ENCODE measurements at regions of chr22 and their contacts with region 1.

Region 1: DNA sequence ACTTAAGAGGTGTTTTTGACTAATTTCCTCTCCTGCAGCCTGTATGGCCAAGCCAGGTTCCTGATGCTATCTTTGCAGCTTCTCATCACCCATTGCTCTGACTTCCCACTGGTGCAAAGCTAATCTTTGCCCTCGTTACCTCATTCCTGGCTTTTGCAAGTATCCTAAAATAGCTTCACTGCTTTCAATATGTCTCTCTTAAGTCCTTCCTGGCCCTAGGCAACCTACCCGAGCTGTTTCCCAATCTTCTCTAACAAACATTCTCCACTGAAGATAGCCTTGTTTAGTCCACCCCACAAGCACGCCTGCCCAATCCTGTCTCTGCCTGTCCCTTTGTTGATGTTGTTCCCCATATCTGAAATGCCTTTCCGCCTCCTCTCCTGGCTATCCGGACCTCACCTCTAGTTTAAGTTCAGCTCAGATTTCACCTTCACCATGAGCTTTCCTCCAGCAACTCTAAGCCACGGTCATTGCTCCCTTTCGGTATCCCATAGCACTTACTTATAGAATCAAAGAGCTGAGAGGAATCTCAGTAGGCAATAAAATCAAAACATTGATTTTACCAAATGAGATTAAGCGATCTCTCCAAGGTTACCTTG is 30.1 kb upstream of the CECR2 start:
- DNase-seq: no peak
- ATAC-seq: no peak
- H3K4me3 ChIP-seq: no peak overlapping the region
- H3K27ac ChIP-seq: no peak overlapping the region
- H3K4me1 ChIP-seq: no peaks in the 10 kb centered on the region
- H3K27me3 ChIP-seq: peaks cover 2% of the 10 kb centered on the region; the same call in 1 of the 2 replicates
- CTCF ChIP-seq: no peak
- POLR2A ChIP-seq: no peak
- RAD21 ChIP-seq: no peak

Region 2: DNA sequence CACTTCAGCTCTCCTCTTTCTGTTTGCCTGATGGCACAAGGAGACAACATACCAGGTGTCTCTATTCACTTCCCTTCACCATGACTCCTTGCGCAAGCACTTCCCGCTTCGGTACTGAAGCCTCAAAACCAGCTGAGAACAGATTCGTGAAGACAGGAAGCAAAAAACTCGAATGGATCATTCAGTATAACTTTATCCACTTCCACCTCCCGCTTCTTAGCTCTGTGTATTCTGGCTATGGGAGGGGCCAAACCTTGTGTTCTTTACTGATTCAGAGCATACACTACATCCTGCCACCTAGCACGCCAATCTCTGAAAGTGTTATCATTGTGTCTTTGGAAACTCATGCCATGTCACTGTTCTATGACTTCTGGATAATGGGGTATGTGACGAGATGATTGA is 57.8 kb before region 1 on chr22:
- CTCF ChIA-PET with region 1: no interaction called
- POLR2A ChIA-PET with region 1: no interaction called
- dilution Hi-C with region 1: no loop called
- in situ Hi-C with region 1: no loop called
- intact Hi-C with region 1: no loop called
- DNase-seq: no peak
- ATAC-seq: no peak
- H3K4me3 ChIP-seq: no peak overlapping the region
- H3K27ac ChIP-seq: no peak overlapping the region
- H3K4me1 ChIP-seq: no peaks in the 10 kb centered on the region
- H3K27me3 ChIP-seq: no peaks in the 10 kb centered on the region
- CTCF ChIP-seq: no peak
- POLR2A ChIP-seq: no peak
- RAD21 ChIP-seq: no peak

Region 3: DNA sequence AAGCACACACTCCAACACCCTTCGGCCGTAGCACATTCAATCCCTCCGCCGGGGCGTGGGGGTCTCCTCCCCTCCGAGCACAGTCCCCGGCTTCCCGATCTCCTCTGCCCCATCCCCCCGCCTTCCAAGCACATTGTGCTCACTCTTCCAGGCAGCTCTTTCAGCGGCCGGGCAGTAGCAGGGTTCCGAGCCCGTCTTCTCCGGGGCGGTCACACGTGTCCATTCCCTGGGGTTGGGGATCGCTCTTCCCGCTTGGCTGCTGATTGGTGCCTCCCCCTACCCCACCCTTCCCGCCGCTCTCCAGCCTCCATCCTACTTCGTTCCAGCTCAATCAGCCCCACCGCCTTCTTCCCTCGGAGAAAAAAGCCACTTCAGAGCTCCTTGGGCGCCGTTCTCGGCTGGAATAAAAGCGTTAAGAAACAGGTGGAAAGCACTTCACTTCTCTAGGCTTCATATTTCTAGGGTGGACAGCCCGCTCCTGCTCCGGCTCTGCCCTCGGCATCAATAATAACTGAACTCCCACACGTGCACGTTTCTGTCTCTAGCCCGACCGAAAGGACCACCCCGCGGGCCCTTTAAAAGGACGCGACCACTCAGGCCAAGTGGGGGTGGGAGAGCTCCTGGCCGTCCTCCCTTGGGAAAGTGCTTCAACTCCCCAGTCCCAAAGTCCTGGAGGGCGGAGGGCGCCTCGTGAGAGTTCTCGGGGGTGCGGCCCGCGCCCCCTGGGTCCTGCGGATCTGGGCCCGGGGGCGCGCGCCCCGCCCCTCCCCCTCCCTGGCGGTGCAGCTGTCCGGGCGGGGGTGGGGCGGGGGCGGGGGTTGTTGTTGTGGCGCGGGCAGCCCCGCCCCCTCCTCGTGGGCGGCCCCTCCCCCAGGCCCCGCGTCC is 29.6 kb after region 1 on chr22:
- CTCF ChIA-PET with region 1: no interaction called
- POLR2A ChIA-PET with region 1: no interaction called
- dilution Hi-C with region 1: no loop called
- in situ Hi-C with region 1: no loop called
- intact Hi-C with region 1: no loop called
- DNase-seq: no peak
- ATAC-seq: 0 out of 2 replicates have a peak, but pooled peaks have one; percentile 24
- H3K4me3 ChIP-seq: no peak overlapping the region
- H3K27ac ChIP-seq: no peak overlapping the region
- H3K4me1 ChIP-seq: peaks cover 2% of the 10 kb centered on the region; the same call in 1 of the 2 replicates
- H3K27me3 ChIP-seq: peaks cover 41% of the 10 kb centered on the region
- CTCF ChIP-seq: no peak
- POLR2A ChIP-seq: no peak
- RAD21 ChIP-seq: no peak

Region 4: GRCh38 chr22:17387356-17387755 is 48.2 kb after region 1 on chr22:
- CTCF ChIA-PET with region 1: no interaction called
- POLR2A ChIA-PET with region 1: no interaction called
- dilution Hi-C with region 1: no loop called
- in situ Hi-C with region 1: no loop called
- intact Hi-C with region 1: loop called (anchors 5 kb)
- DNase-seq: no peak
- ATAC-seq: no peak
- H3K4me3 ChIP-seq: no peak overlapping the region
- H3K27ac ChIP-seq: no peak overlapping the region
- H3K4me1 ChIP-seq: no peaks in the 10 kb centered on the region
- H3K27me3 ChIP-seq: no peaks in the 10 kb centered on the region
- CTCF ChIP-seq: no peak
- POLR2A ChIP-seq: no peak
- RAD21 ChIP-seq: no peak

Region 5: GRCh38 chr22:17460895-17461294 is 121.7 kb after region 1 on chr22:
- CTCF ChIA-PET with region 1: no interaction called
- POLR2A ChIA-PET with region 1: no interaction called
- dilution Hi-C with region 1: no loop called
- in situ Hi-C with region 1: no loop called
- intact Hi-C with region 1: no loop called
- DNase-seq: no peak
- ATAC-seq: no peak
- H3K4me3 ChIP-seq: no peak overlapping the region
- H3K27ac ChIP-seq: no peak overlapping the region
- H3K4me1 ChIP-seq: no peaks in the 10 kb centered on the region
- H3K27me3 ChIP-seq: no peaks in the 10 kb centered on the region
- CTCF ChIP-seq: no peak
- POLR2A ChIP-seq: no peak
- RAD21 ChIP-seq: no peak

Region 6: GRCh38 chr22:18078329-18079041 is 739.3 kb after region 1 on chr22:
- CTCF ChIA-PET with region 1: no interaction called
- POLR2A ChIA-PET with region 1: no interaction called
- dilution Hi-C with region 1: no loop called
- in situ Hi-C with region 1: no loop called
- intact Hi-C with region 1: no loop called
- DNase-seq: peak; percentile 19
- ATAC-seq: peak; percentile 4; the same call in 1 of the 2 replicates
- H3K4me3 ChIP-seq: peak overlapping the region; percentile 87
- H3K27ac ChIP-seq: peak overlapping the region; percentile 83
- H3K4me1 ChIP-seq: peaks cover 2% of the 10 kb centered on the region
- H3K27me3 ChIP-seq: no peaks in the 10 kb centered on the region
- CTCF ChIP-seq: 0 out of 2 replicates have a peak, but pooled peaks have one; percentile 10
- POLR2A ChIP-seq: no peak
- RAD21 ChIP-seq: 0 out of 2 replicates have a peak, but pooled peaks have one; percentile 13

Measured in IMR-90 (cell line).